AG04449 (cell line): ENCODE measurements at regions of chr6 and their contacts with region 1.

Region 1: GRCh38 chr6:116268589-116269293 is 11.0 kb downstream of the TSPYL1 start:
- DNase-seq: peak; percentile 42
- H3K4me3 ChIP-seq: no peak overlapping the region
- CTCF ChIP-seq: peak; percentile 74

Region 2: GRCh38 chr6:116253505-116254296 is 15.0 kb before region 1 on chr6 and contains the start of gene TSPYL4:
- CTCF ChIA-PET with region 1: interaction called, 87 read pairs
- POLR2A ChIA-PET with region 1: interaction called, 5 read pairs
- DNase-seq: no peak
- H3K4me3 ChIP-seq: peak within 1 kb of the TSS; percentile 98
- CTCF ChIP-seq: no peak

Region 3: DNA sequence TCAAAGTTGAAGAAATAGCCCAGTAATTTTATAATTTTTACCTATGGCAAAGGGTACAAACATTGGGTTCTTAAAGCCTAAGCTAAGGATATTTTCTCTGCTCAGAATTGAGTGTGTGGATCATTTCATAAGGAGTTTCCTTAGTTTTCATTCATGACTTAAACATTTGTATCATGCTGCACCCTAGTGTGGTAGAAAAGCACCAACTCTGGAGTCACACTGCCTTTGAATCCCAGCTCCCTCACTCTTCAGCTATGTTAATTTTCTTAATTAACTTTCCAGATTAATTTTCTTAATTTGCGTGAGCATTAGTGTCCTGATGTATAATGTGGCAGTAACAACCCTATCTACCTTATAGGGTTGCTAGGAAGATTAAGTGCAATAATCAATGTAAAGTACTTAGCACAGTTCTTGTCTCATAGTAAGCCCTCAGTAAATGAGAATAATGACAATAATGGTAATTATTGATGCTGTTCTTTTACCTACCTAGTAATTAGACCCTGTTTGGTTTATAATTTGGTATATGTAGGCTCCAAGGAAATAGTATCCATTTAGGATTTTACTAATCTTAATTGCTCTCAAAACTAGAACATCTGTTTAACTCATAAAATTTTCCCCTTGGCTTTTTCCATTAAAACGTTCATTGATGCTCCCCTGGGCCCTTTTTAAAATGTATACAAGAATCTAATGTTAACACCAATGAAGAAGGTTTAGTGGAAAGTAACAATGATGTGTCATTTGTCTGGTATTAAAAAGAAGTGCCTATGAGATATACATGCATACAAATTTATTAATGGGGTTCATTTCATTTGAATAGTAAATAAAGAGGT is 133.6 kb after region 1 on chr6:
- CTCF ChIA-PET with region 1: interaction called, 14 read pairs
- POLR2A ChIA-PET with region 1: no interaction called
- DNase-seq: no peak
- H3K4me3 ChIP-seq: no peak overlapping the region
- CTCF ChIP-seq: no peak

Region 4: GRCh38 chr6:116444092-116444491 is 175.4 kb after region 1 on chr6:
- CTCF ChIA-PET with region 1: interaction called, 16 read pairs
- POLR2A ChIA-PET with region 1: no interaction called
- DNase-seq: no peak
- H3K4me3 ChIP-seq: no peak overlapping the region
- CTCF ChIP-seq: peak; percentile 56

Region 5: GRCh38 chr6:116531675-116532570 is 263.2 kb after region 1 on chr6:
- CTCF ChIA-PET with region 1: interaction called, 120 read pairs
- POLR2A ChIA-PET with region 1: no interaction called
- DNase-seq: no peak
- H3K4me3 ChIP-seq: no peak overlapping the region
- CTCF ChIP-seq: peak; percentile 57

Region 6: DNA sequence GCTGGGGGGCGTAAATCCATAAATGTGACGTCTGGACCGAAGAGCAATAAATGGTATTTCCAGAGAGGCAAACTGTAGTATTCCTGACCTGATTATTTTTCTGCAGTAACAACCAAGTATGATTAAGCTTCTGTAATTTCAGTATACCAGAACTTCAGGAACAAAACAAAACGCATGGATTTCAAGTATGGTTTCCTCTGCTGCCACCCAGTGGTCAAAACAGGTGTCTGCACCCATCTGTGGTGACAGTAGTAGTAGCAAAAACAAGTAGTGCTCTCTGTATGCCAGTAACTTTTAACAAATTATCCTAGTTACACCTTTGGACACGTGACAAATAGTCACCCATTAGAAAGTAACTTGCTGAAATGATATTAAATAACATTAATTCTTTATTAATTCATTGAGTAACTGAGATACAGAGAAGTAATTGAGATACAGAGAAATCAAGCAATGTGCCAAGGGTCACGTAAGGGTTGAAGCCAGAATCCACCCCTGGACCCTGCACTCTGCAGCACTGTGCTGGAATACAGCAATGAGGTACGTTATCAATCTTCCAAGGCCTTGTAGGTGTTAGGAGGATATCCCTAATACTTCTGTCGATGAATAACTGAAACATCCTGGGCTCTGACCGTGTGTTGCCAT is 292.8 kb after region 1 on chr6:
- CTCF ChIA-PET with region 1: interaction called, 112 read pairs
- POLR2A ChIA-PET with region 1: no interaction called
- DNase-seq: no peak
- H3K4me3 ChIP-seq: no peak overlapping the region
- CTCF ChIP-seq: peak; percentile 70

Region 7: GRCh38 chr6:116648156-116648555 is 379.4 kb after region 1 on chr6:
- CTCF ChIA-PET with region 1: interaction called, 10 read pairs
- POLR2A ChIA-PET with region 1: no interaction called
- DNase-seq: peak; percentile 26
- H3K4me3 ChIP-seq: no peak overlapping the region
- CTCF ChIP-seq: no peak